ENCODE measurements at regions of chr4 and their contacts with region 1.

Region 1: DNA sequence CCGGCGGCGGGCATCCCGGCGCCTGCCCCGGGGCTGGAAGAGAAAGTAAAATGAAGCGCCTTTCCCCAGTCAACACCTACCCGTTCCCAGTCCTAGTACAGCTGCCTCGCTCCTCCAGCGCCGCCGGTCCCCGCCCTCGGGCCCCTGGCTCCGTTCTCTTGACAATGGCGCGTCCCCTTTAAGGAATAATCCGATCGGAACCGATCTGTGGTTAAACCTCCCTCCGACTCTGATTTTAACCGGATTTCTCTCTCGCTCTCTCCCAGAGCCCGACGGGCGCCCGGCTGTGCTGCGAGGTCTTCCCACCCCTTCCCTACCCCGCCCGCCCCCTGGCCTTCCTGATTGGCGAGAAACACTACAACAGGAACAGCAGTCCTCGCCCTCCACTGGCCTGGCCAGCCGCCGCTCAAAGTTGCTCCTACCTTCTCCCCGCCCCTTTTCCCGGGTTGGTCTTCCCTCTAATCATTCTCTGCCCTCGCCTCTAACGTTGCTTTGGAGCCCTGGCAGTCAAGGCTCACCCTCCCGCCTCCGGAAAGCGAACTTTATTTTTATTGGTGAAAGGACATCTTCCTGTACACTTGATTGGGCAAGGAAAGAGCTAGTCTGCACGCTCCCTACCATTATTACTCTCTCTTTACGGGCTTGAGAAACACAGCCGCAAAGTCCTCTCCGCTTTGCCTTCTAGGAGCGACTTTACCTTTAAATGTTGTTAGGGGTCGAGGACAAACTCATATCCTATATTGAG is at the start of gene FRYL:
- DNase-seq: peak; percentile 98 to 100 (median 100)
- H3K4me3 ChIP-seq: peak within 1 kb of the TSS; percentile 62 to 98 (median 93)
- H3K27ac ChIP-seq: peak within 1 kb of the TSS; percentile 74 to 99 (median 96)
- H3K27me3 ChIP-seq: no peaks in the 10 kb centered on the region
- CTCF ChIP-seq: peak in 6 of 56 donors; percentile 1 to 28 (median 6)
- total RNA-seq, gene FRYL: 57.6 to 345 (median 151) TPM

Region 2: GRCh38 chr4:48340965-48341775 is 439.0 kb before region 1 on chr4 and contains the start of gene SLAIN2:
- intact Hi-C with region 1: loop called in 1 of 2 experiments (anchors 5 kb)
- DNase-seq: peak; percentile 95 to 99 (median 96)
- H3K4me3 ChIP-seq: peak within 1 kb of the TSS; percentile 70 to 99 (median 91)
- H3K27ac ChIP-seq: peak within 1 kb of the TSS; percentile 88 to 99 (median 97)
- H3K27me3 ChIP-seq: no peaks in the 10 kb centered on the region
- CTCF ChIP-seq: peak in 43 of 56 donors; percentile 8 to 53 (median 31)
- total RNA-seq, gene SLAIN2: 34.7 to 126 (median 68.5) TPM

Region 3: GRCh38 chr4:48653217-48654014 is 126.8 kb before region 1 on chr4:
- intact Hi-C with region 1: loop called (anchors 2 to 5 kb)
- DNase-seq: peak; percentile 47 to 90 (median 83)
- H3K4me3 ChIP-seq: peak overlapping the region; percentile 29 to 74 (median 51)
- H3K27ac ChIP-seq: peak overlapping the region; percentile 67 to 99 (median 88)
- H3K27me3 ChIP-seq: no peaks in the 10 kb centered on the region
- CTCF ChIP-seq: peak in 6 of 56 donors; percentile 15 to 29 (median 22)

Region 4: DNA sequence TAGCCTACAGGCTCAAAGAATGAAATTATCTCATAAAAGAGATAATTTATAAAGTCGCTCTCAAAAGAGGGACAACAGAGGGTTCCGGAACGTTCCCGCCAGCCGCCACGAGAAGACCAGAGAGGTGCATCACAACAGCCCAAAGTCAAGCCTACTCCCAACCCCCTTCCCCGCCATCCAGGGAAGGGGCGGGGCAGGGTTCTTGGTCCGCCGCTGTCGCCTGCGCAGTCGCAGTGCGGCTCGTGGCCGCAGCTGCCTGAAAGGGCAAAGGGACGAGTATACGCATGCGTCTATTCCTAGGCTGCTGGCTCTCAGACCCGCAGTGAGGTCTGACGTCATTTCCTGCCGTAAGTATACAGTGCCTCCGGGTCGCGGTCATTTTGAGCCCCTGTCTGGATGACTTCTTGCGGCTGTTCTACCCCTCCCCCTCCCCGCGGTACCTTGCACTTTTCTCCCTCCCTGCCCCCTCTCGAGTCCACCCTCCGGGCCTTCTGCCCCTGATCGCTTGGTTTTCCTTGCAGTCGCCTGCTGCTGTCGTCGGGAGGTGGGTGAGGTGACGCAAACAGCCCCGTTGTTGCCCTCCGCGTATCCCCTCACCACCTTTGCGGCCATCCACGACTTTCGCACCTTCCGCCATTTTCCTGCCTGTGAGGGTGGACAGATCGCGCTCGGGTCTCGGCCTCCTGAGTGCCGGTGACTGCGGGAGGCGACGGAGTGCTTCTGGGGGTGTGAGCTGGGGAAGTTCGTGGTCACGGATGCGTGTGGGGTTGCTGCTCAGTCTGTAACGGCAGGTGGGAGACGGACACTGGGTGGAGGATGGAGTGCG is 50.7 kb after region 1 on chr4 and contains the start of gene OCIAD1:
- intact Hi-C with region 1: loop called (anchors 2 kb)
- DNase-seq: peak; percentile 96 to 99 (median 98)
- H3K4me3 ChIP-seq: peak within 1 kb of the TSS; percentile 63 to 99 (median 88)
- H3K27ac ChIP-seq: peak within 1 kb of the TSS; percentile 76 to 99 (median 94)
- H3K27me3 ChIP-seq: no peaks in the 10 kb centered on the region
- CTCF ChIP-seq: peak in 28 of 56 donors; percentile 6 to 44 (median 24)
- total RNA-seq, gene OCIAD1: 135 to 352 (median 263) TPM

Region 5: GRCh38 chr4:48963042-48963679 is 183.0 kb after region 1 on chr4:
- intact Hi-C with region 1: loop called (anchors 10 kb)
- DNase-seq: peak; percentile 33 to 78 (median 60)
- H3K4me3 ChIP-seq: no peak overlapping the region
- H3K27ac ChIP-seq: no peak overlapping the region
- H3K27me3 ChIP-seq: no peaks in the 10 kb centered on the region
- CTCF ChIP-seq: peak; percentile 82 to 100 (median 98)

Measured in dorsolateral prefrontal cortex (tissue), 120 donors.